Ascending aorta (tissue), 2 donors: ENCODE measurements at regions of chr5 and their contacts with region 1.

Region 1: DNA sequence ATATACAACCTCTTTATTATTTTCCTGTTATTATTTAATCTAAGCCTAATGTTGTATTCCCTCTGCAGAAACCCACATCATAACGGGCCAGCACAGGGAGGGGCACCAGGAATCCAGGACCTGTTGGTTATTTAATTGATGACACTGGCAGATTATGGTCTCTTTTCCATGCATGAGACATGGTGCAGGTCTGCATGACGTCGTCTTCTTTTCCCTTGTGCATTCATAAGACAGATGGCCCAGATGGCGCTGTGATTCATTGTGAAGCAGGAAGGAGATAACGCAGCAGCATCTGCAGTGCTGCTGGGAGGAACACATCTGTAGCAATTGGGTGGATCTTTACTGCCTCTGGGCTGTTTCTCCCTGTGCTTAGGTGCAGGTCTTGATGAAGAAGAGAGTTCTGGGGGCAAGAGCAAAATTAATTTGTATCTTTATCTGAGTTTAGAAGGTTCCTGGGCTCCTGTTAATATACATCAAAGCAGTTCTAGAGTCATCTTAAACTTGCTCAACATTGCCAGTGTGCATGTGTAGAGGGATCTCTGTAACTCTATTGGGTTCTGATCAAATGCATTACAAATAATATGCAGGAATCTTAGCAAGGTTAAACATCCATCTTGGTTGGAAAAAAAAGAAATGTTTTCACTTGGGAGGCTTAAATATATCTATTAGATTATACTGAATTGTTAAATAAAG is 176.1 kb downstream of the PCSK1 start:
- DNase-seq: no peak
- H3K4me3 ChIP-seq: no peak overlapping the region
- H3K27ac ChIP-seq: peak overlapping the region in 1 of 2 donors; percentile 80
- H3K4me1 ChIP-seq: peaks cover 0 to 27% of the 10 kb centered on the region in 2 donors
- H3K27me3 ChIP-seq: no peaks in the 10 kb centered on the region
- CTCF ChIP-seq: no peak

Region 2: GRCh38 chr5:96297290-96297689 is 40.4 kb after region 1 on chr5:
- intact Hi-C with region 1: loop called (anchors 5 kb)
- DNase-seq: no peak
- H3K4me3 ChIP-seq: no peak overlapping the region
- H3K27ac ChIP-seq: peak overlapping the region; percentile 54 to 56
- H3K4me1 ChIP-seq: peaks cover 3 to 13% of the 10 kb centered on the region in 2 donors
- H3K27me3 ChIP-seq: no peaks in the 10 kb centered on the region
- CTCF ChIP-seq: no peak

Region 3: GRCh38 chr5:96331210-96331609 is 74.3 kb after region 1 on chr5:
- intact Hi-C with region 1: loop called (anchors 5 kb)
- DNase-seq: no peak
- H3K4me3 ChIP-seq: no peak overlapping the region
- H3K27ac ChIP-seq: no peak overlapping the region
- H3K4me1 ChIP-seq: peaks cover 5 to 34% of the 10 kb centered on the region in 2 donors
- H3K27me3 ChIP-seq: no peaks in the 10 kb centered on the region
- CTCF ChIP-seq: no peak

Region 4: DNA sequence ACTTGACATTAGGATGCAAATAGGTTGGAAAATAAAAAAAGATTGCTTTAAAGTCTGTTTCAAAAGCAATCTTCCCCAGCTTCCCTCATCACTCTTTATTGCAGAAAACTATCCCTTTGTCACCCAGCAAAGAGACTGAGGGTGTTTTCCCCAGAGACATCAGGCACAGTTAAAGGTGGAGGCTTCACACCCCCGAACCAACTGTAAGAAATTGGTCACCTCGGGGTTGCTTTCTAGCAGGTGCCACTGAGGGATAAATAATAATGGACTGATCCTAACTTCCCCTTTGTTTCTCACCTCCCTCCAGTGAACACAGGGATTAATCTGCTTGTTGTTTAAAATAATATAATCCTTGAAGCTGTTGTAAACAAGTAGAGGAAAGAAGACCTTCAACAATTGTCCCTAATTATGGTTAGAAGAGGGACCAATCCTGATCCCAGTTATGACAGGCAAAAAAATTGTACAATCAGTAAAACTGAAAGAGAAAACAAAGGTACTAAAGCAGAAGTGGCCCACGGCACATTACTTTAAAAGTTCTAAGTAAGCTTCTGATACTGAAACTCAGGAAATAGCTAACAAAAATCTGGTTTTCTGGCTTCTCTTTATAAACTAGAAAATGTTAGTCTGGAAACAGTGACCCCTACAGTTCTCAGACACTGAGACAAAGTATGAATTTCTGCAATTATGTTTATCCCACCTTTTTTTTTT is 182.7 kb after region 1 on chr5:
- intact Hi-C with region 1: no loop called
- DNase-seq: no peak
- H3K4me3 ChIP-seq: no peak overlapping the region
- H3K27ac ChIP-seq: no peak overlapping the region
- H3K4me1 ChIP-seq: no peaks in the 10 kb centered on the region
- H3K27me3 ChIP-seq: no peaks in the 10 kb centered on the region
- CTCF ChIP-seq: peak in 1 of 3 experiments; percentile 18